Vagina (tissue), 2 donors: ENCODE measurements at regions of chr2 and their contacts with region 1.

Region 1: DNA sequence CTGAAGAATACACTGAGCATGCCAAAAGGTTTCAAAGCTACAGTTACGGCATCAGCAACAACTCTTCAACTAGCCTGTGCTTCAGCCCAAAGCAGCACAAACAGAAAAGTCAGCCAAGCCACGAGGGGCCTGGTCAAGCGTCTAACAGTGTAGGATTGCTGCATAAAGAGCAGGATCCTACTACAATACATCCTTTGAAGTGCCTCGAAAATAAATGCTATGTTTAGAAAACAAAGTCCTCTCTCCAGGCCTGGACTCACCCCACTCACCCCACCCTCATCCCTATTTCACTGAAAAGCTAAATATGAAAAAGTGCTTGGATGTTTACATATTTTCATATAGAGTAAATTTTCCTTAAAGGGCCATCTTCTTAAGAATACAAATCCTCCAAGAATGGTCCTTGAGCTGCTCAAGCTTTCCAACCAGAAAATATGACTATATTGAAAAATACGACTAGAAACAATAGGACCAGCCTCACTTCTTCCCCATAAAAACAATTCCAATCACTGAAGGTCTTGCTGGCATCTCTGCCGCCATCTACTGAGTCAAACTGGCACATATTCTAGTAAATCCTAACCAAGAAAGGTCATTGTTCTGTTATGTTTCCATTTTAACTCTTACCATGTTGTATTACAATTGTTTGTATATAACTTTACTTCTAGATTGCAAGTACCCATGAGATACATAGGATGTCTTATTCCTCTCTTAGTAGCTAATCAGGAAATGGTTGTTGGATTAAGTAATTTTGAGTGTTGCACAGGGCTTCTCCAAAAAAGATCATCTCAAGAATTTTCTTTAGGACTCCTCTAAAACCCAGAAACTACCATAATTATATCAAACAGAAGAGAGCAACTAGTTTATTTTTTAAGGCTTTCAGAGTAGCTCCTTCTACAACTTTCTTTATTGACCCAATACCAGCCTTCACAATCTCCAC is 63.6 kb downstream of the CLHC1 start:
- DNase-seq: peak in 1 of 2 donors; percentile 92
- H3K4me3 ChIP-seq: no peak overlapping the region
- H3K27ac ChIP-seq: peak overlapping the region; percentile 71
- H3K4me1 ChIP-seq: peaks cover 21% of the 10 kb centered on the region
- H3K27me3 ChIP-seq: no peaks in the 10 kb centered on the region
- CTCF ChIP-seq: peak in 2 of 3 experiments; percentile 38 to 74
- POLR2A ChIP-seq: no peak

Region 2: GRCh38 chr2:55010149-55010591 is 158.3 kb before region 1 on chr2:
- intact Hi-C with region 1: loop called (anchors 10 kb)
- DNase-seq: no peak
- H3K4me3 ChIP-seq: peak overlapping the region; percentile 23 to 30
- H3K27ac ChIP-seq: peak overlapping the region; percentile 50
- H3K4me1 ChIP-seq: peaks cover 95% of the 10 kb centered on the region
- H3K27me3 ChIP-seq: no peaks in the 10 kb centered on the region
- CTCF ChIP-seq: no peak
- POLR2A ChIP-seq: no peak

Region 3: DNA sequence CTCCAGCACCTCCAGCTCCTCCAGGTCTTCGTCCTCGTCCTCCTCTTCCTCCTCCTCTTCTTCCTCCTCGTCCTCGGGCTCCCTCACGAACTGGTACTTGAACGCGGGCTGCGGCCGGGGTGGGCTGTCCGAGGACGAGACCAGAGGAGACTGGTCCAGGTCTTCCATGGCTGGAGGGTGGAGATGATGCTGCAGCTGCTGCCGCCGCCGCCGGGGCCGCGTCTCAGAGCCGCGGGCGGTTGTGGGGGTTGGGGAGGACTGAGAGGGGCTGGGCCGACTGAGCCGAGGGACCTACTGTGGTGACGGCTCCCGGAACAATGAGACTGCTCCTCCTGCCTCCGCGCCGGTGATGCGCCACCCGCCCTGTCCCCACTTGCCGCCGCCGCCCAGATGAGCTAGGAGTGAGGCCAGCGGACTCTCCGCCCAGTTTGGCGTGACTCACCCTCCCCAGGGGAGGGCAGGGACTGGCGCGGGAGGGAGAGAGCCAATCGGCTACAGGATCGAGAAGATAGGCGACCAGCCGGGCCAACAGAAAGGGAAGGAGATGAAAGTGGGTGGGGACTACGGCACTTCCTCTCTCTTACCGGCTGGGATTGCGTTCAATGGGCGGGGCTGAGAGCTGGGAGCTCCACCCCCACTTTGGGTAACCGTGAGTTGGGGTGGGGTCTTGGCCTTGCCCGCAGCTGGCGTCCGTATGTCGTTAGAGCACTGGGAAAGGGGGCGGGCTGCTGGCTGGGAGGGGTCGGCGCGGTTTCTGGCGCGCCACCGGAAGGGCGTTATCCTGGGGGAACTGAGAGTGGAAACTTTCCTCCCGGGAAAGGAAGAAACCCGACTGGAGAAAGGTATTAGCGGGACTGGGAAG is 118.1 kb before region 1 on chr2 and contains the start of gene RTN4:
- intact Hi-C with region 1: loop called (anchors 10 kb)
- DNase-seq: peak; percentile 100
- H3K4me3 ChIP-seq: peak within 1 kb of the TSS; percentile 87 to 95
- H3K27ac ChIP-seq: peak within 1 kb of the TSS; percentile 99
- H3K4me1 ChIP-seq: peaks cover 44% of the 10 kb centered on the region
- H3K27me3 ChIP-seq: no peaks in the 10 kb centered on the region
- CTCF ChIP-seq: peak in 1 of 3 experiments; percentile 6
- POLR2A ChIP-seq: peak; percentile 93 to 99
- total RNA-seq, gene RTN4: 174 TPM

Region 4: GRCh38 chr2:55099878-55100820 is 68.3 kb before region 1 on chr2:
- intact Hi-C with region 1: loop called (anchors 5 kb)
- DNase-seq: no peak
- H3K4me3 ChIP-seq: no peak overlapping the region
- H3K27ac ChIP-seq: peak overlapping the region; percentile 34
- H3K4me1 ChIP-seq: peaks cover 21% of the 10 kb centered on the region
- H3K27me3 ChIP-seq: no peaks in the 10 kb centered on the region
- CTCF ChIP-seq: no peak
- POLR2A ChIP-seq: no peak